Right lobe of liver (tissue), 6 donors: ENCODE measurements at regions of chr4 and their contacts with region 1.

Region 1: DNA sequence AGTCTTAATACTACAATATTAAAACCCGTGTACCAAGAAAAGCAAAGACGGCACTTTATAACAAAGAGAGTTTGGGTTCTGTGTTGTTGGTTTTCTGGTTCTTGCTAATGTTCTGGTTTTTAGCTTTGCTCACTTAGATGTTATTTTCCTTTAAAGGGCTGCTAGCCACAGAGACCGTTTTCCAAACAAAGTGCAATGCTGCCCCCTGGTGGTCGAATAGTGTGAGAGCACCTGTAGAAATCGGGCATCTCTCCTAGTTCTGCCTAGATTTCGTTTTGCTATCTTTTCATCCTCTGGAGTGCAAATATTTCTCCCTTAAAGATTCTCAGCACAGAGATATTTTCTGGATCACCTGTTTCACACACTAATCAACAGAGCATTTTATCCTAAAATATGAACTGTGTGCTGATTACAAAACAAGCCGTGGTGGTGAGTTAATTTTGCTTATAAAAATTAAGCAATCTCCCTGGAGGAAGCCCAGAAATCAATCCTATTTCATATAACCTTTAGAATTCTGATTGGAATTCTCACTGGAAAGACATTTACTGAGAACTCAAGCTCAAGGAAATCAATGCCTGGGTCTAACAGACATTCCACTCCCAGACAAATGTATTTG is 334.5 kb upstream of the NOCT start:
- DNase-seq: peak; percentile 72 to 80 (median 80)
- ATAC-seq: peak; percentile 91 to 97 (median 94)
- H3K4me3 ChIP-seq: no peak overlapping the region
- H3K27ac ChIP-seq: no peak overlapping the region
- H3K4me1 ChIP-seq: no peaks in the 10 kb centered on the region
- H3K27me3 ChIP-seq: no peaks in the 10 kb centered on the region
- CTCF ChIP-seq: peak; percentile 91 to 97 (median 94)
- POLR2A ChIP-seq: no peak

Region 2: GRCh38 chr4:138487670-138488069 is 193.4 kb before region 1 on chr4:
- intact Hi-C with region 1: no loop called
- DNase-seq: no peak
- ATAC-seq: no peak
- H3K4me3 ChIP-seq: no peak overlapping the region
- H3K27ac ChIP-seq: no peak overlapping the region
- H3K4me1 ChIP-seq: no peaks in the 10 kb centered on the region
- H3K27me3 ChIP-seq: no peaks in the 10 kb centered on the region
- CTCF ChIP-seq: no peak
- POLR2A ChIP-seq: no peak

Region 3: DNA sequence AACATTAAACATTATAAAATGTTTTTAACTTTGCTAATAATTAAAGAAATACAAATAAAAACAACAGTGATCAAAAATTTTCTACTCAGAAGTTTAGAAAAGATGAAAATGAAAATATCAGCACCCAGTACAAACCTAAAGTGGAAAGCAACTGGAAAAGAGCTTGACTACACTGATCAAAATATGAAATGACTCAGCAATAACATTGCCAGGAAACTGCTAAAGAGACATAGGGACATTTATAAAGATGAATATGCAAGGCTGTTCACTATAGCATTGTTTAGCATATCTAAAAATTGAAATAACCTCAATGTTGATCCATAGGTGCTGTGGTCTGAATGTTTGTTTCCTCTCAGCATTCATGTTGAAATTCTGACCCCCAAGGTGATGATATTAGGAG is 246.0 kb after region 1 on chr4:
- intact Hi-C with region 1: loop called in 1 of 2 experiments (anchors 10 kb)
- DNase-seq: no peak
- ATAC-seq: no peak
- H3K4me3 ChIP-seq: no peak overlapping the region
- H3K27ac ChIP-seq: no peak overlapping the region
- H3K4me1 ChIP-seq: no peaks in the 10 kb centered on the region
- H3K27me3 ChIP-seq: no peaks in the 10 kb centered on the region
- CTCF ChIP-seq: no peak
- POLR2A ChIP-seq: no peak

Region 4: DNA sequence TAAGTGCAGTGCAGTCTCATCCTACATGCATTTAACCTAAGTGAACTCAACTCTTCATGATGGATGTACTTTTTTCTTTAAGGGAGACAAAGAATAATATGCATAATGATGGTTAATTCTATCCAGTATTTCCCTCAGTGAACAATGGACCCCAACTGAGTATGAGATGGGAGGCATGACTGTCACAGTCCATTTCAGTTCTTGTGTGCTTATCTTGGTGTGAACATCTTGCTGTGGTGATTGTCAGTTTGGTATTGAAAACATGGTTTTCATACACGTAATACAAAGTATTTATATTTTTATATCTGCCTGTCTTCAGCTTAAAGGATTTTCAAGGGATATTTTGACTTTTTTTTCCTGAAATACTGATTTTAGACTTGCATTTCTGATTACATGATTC is 693.2 kb after region 1 on chr4:
- intact Hi-C with region 1: no loop called
- DNase-seq: no peak
- ATAC-seq: no peak
- H3K4me3 ChIP-seq: no peak overlapping the region
- H3K27ac ChIP-seq: no peak overlapping the region
- H3K4me1 ChIP-seq: no peaks in the 10 kb centered on the region
- H3K27me3 ChIP-seq: no peaks in the 10 kb centered on the region
- CTCF ChIP-seq: no peak
- POLR2A ChIP-seq: no peak